ENCODE measurements at regions of chr12 and their contacts with region 1.

Region 1: DNA sequence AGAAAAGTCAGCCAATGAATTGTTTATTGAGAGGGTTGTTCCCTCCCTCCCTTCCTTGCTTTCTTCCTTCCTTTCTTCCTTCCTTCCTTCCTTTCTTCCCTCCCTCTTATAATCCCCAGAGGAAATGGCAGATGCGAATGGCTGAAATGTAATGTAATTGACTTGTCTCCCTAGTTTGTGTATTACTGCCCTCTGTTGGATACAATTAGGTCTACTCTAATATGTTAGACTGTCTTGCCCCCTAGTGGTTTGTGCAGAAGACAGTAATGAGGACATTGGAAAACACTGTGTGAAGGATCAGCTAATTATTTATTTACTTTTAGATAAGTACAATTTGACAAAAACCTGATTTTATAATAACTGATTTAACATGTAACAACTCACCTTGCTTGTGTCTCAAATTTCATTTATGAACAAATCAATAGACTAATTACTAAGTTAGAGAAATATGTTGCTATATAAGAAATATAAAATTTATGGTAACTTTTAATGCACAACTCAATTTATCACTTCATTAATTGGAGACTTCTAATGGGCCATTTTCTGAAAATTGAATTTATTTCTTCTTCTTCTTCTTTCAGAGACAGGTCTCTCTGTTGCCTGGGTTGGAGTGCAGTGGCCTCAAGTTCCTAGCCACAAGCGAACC is 229.8 kb upstream of the LRIG3 start:
- DNase-seq: peak; percentile 38
- H3K4me3 ChIP-seq: no peak overlapping the region
- CTCF ChIP-seq: peak; percentile 83

Region 2: GRCh38 chr12:59122784-59123183 is 27.3 kb before region 1 on chr12:
- CTCF ChIA-PET with region 1: interaction called, 123 read pairs
- POLR2A ChIA-PET with region 1: no interaction called
- DNase-seq: no peak
- H3K4me3 ChIP-seq: no peak overlapping the region
- CTCF ChIP-seq: no peak

Region 3: GRCh38 chr12:59131462-59131861 is 18.7 kb before region 1 on chr12:
- CTCF ChIA-PET with region 1: interaction called, 16 read pairs
- POLR2A ChIA-PET with region 1: no interaction called
- DNase-seq: no peak
- H3K4me3 ChIP-seq: no peak overlapping the region
- CTCF ChIP-seq: no peak

Region 4: DNA sequence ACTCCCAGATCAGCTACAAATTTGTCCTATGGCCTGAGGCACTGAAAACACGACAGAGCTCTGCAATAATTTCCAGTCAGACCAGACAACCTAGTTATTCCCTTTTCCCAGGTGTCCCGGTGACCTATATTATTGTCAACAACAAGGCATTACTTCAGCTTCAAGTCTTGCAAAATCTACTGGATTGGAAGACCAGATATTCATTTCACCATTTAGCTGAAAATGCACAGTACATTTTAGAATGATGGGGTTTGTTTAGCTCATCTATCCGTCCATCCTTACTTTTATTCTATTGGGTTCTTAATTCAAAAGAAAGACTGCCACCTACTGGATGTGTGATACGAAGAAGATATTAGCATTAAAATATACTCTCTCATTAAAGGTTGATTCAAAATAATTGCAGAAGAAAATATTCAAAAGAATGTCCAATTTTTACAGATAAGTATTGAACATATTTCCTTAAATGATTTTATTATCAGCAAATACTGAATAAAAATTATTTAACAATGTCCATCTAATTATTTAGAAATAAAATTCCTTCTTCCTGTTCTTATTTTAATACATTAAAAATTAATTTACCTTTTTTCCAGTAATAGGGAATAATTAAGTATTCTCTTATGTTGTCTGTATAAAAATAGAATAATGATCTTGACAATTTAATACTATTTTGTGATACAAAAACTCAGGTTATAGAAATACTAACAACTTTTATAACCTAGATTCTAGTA is 15.0 kb after region 1 on chr12:
- CTCF ChIA-PET with region 1: interaction called, 53 read pairs
- POLR2A ChIA-PET with region 1: no interaction called
- DNase-seq: no peak
- H3K4me3 ChIP-seq: no peak overlapping the region
- CTCF ChIP-seq: peak; percentile 15

Region 5: DNA sequence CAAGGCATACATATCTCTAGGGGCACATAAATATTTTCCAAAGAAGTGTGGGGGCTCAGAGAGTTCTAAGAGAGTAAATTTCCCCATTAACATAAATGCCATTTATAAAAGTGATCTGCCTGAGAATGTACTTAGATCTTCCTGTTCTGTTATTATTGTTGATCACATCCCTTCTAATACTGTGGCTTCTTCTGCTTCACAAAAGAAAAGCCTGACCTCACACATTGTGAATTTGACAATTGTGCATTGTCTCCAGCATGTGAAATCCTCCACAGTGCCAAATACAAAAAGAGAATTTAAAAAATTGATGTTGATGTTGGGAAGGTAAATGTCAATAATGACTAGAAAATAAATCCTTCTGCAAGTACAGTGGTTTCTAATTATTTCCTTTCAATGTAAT is 100.6 kb after region 1 on chr12:
- CTCF ChIA-PET with region 1: no interaction called
- POLR2A ChIA-PET with region 1: no interaction called
- DNase-seq: no peak
- H3K4me3 ChIP-seq: no peak overlapping the region
- CTCF ChIP-seq: no peak

Region 6: GRCh38 chr12:59472273-59472672 is 322.2 kb after region 1 on chr12:
- CTCF ChIA-PET with region 1: no interaction called
- POLR2A ChIA-PET with region 1: no interaction called
- DNase-seq: no peak
- H3K4me3 ChIP-seq: no peak overlapping the region
- CTCF ChIP-seq: no peak

Measured in AG04449 (cell line).